CD8-positive, alpha-beta T cell (primary cell): ENCODE measurements at regions of chr15 and their contacts with region 1.

Region 1: GRCh38 chr15:40344631-40345120 is 3.9 kb upstream of the CCDC9B start:
- DNase-seq: peak; percentile 41 to 81 (median 69)
- ATAC-seq: peak; percentile 98
- H3K4me3 ChIP-seq: no peak overlapping the region
- H3K4me3 Mint-ChIP-seq: no peak overlapping the region
- H3K27ac ChIP-seq: no peak overlapping the region
- H3K27ac Mint-ChIP-seq: no peak overlapping the region
- H3K4me1 ChIP-seq: no peaks in the 10 kb centered on the region
- H3K4me1 Mint-ChIP-seq: no peaks in the 10 kb centered on the region
- H3K27me3 ChIP-seq: no peaks in the 10 kb centered on the region
- H3K27me3 Mint-ChIP-seq: no peaks in the 10 kb centered on the region
- CTCF ChIP-seq: peak; percentile 75

Region 2: DNA sequence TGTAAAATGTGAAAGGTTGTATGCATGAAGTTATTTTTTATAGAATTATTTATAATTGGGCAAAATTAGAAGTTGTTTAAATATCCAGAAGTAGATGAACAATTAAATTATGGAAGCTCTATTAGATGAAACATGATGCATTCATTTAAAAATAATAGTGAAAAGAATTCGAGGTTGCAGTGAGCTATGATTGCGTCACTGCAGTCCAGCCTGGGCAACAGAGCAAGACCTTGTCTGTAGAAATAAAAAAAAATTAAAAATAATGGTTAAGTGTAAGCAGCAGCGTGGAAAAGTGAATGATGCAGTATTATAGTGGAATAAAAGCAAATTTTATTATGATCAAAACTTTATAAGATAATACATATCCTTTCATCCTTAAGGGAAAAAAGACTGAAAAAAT is 169.5 kb before region 1 on chr15:
- CTCF ChIA-PET with region 1: no interaction called
- POLR2A ChIA-PET with region 1: no interaction called
- intact Hi-C with region 1: no loop called
- DNase-seq: no peak
- ATAC-seq: no peak
- H3K4me3 ChIP-seq: no peak overlapping the region
- H3K4me3 Mint-ChIP-seq: no peak overlapping the region
- H3K27ac ChIP-seq: no peak overlapping the region
- H3K27ac Mint-ChIP-seq: no peak overlapping the region
- H3K4me1 ChIP-seq: no peaks in the 10 kb centered on the region
- H3K4me1 Mint-ChIP-seq: no peaks in the 10 kb centered on the region
- H3K27me3 ChIP-seq: no peaks in the 10 kb centered on the region
- H3K27me3 Mint-ChIP-seq: no peaks in the 10 kb centered on the region
- CTCF ChIP-seq: no peak

Region 3: GRCh38 chr15:40290918-40291574 is 53.6 kb before region 1 on chr15:
- CTCF ChIA-PET with region 1: interaction called, 27 read pairs
- POLR2A ChIA-PET with region 1: no interaction called
- intact Hi-C with region 1: no loop called
- DNase-seq: no peak
- ATAC-seq: no peak
- H3K4me3 ChIP-seq: no peak overlapping the region
- H3K4me3 Mint-ChIP-seq: no peak overlapping the region
- H3K27ac ChIP-seq: no peak overlapping the region
- H3K27ac Mint-ChIP-seq: no peak overlapping the region
- H3K4me1 ChIP-seq: no peaks in the 10 kb centered on the region
- H3K4me1 Mint-ChIP-seq: no peaks in the 10 kb centered on the region
- H3K27me3 ChIP-seq: no peaks in the 10 kb centered on the region
- H3K27me3 Mint-ChIP-seq: no peaks in the 10 kb centered on the region
- CTCF ChIP-seq: no peak

Region 4: GRCh38 chr15:40357723-40358470 is 13.2 kb after region 1 on chr15 and contains the start of gene DISP2:
- CTCF ChIA-PET with region 1: interaction called, 9 read pairs
- POLR2A ChIA-PET with region 1: no interaction called
- intact Hi-C with region 1: loop called in 1 of 2 experiments (anchors 1 kb)
- DNase-seq: peak; percentile 82 to 93 (median 88)
- ATAC-seq: peak; percentile 94
- H3K4me3 ChIP-seq: peak within 1 kb of the TSS; percentile 63 to 65
- H3K4me3 Mint-ChIP-seq: peak within 1 kb of the TSS; percentile 83
- H3K27ac ChIP-seq: no peak within 1 kb of the TSS
- H3K27ac Mint-ChIP-seq: no peak within 1 kb of the TSS
- H3K4me1 ChIP-seq: peaks cover 13% of the 10 kb centered on the region
- H3K4me1 Mint-ChIP-seq: peaks cover 9% of the 10 kb centered on the region
- H3K27me3 ChIP-seq: no peaks in the 10 kb centered on the region
- H3K27me3 Mint-ChIP-seq: peaks cover 2% of the 10 kb centered on the region
- CTCF ChIP-seq: no peak
- total RNA-seq, gene DISP2: 0.05 to 0.25 TPM

Region 5: DNA sequence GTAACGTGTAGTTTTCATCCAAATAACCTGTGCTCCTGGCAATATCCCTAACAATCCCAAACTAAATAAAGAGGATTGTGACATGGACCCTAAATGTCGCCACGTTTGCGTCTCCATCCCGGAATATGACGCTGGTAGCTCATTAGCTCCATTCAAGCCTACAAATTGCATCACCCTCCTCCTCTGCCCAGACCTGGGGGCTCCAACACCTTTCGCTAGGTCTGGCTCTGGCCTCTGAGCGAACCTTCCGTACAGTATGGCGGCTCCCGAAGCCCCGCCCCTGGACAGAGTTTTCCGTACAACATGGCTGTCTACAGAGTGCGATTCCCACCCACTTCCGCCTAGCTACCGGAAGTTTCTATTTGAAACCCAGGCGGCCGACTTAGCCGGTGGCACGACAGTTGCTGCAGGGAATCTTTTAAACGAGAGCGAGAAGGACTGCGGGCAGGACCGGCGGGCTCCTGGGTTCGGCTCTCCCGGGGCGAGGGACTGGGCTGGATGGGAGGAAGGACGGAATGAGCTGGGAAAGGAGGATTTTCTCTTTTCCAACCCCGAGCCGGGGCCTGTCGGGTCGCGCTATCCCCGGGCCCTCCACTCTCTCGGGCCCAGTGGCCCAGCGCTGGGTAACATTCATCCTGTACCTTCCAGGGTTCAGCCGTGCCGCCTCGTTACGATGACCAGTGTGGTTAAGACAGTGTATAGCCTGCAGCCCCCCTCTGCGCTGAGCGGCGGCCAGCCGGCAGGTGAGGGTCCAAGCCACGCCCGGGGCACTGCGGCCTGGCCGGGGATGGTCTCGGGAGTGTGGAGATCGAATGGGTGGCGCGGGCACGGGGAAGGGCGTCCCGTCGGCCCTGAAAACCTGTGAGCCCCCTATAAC is 38.1 kb after region 1 on chr15 and contains the start of gene KNSTRN:
- CTCF ChIA-PET with region 1: interaction called, 7 read pairs
- POLR2A ChIA-PET with region 1: no interaction called
- intact Hi-C with region 1: loop called in 1 of 2 experiments (anchors 1 kb)
- DNase-seq: peak; percentile 84 to 95 (median 93)
- ATAC-seq: peak; percentile 99
- H3K4me3 ChIP-seq: peak within 1 kb of the TSS; percentile 73 to 93
- H3K4me3 Mint-ChIP-seq: peak within 1 kb of the TSS; percentile 99
- H3K27ac ChIP-seq: peak within 1 kb of the TSS in 1 of 2 experiments; percentile 54
- H3K27ac Mint-ChIP-seq: peak within 1 kb of the TSS; percentile 81
- H3K4me1 ChIP-seq: peaks cover 13% of the 10 kb centered on the region
- H3K4me1 Mint-ChIP-seq: peaks cover 16% of the 10 kb centered on the region
- H3K27me3 ChIP-seq: no peaks in the 10 kb centered on the region
- H3K27me3 Mint-ChIP-seq: no peaks in the 10 kb centered on the region
- CTCF ChIP-seq: no peak
- total RNA-seq, gene KNSTRN: 3.8 to 5.4 TPM

Region 6: GRCh38 chr15:40506964-40507571 is 162.4 kb after region 1 on chr15:
- CTCF ChIA-PET with region 1: interaction called, 6 read pairs
- POLR2A ChIA-PET with region 1: no interaction called
- intact Hi-C with region 1: loop called (anchors 1 kb)
- DNase-seq: peak; percentile 18 to 80 (median 65)
- ATAC-seq: peak; percentile 74
- H3K4me3 ChIP-seq: peak overlapping the region in 1 of 2 experiments; percentile 8
- H3K4me3 Mint-ChIP-seq: no peak overlapping the region
- H3K27ac ChIP-seq: no peak overlapping the region
- H3K27ac Mint-ChIP-seq: no peak overlapping the region
- H3K4me1 ChIP-seq: peaks cover 20% of the 10 kb centered on the region
- H3K4me1 Mint-ChIP-seq: peaks cover 22% of the 10 kb centered on the region
- H3K27me3 ChIP-seq: peaks cover 18 to 19% of the 10 kb centered on the region in 2 experiments
- H3K27me3 Mint-ChIP-seq: peaks cover 59% of the 10 kb centered on the region
- CTCF ChIP-seq: peak; percentile 61